MCF 10A (cell line): ENCODE measurements at regions of chr20 and their contacts with region 1.

Region 1: GRCh38 chr20:3716195-3716834 is 3.9 kb upstream of the SIGLEC1 start:
- DNase-seq: peak; percentile 59
- H3K4me3 Mint-ChIP-seq: no peak overlapping the region
- H3K27ac Mint-ChIP-seq: no peak overlapping the region
- H3K4me1 Mint-ChIP-seq: no peaks in the 10 kb centered on the region
- H3K27me3 Mint-ChIP-seq: peaks cover 18% of the 10 kb centered on the region
- CTCF ChIP-seq: peak; percentile 67

Region 2: GRCh38 chr20:2919518-2920245 is 796.6 kb before region 1 on chr20:
- CTCF ChIA-PET with region 1: no interaction called
- POLR2A ChIA-PET with region 1: no interaction called
- intact Hi-C with region 1: no loop called
- DNase-seq: no peak
- H3K4me3 Mint-ChIP-seq: no peak overlapping the region
- H3K27ac Mint-ChIP-seq: no peak overlapping the region
- H3K4me1 Mint-ChIP-seq: peaks cover 10% of the 10 kb centered on the region
- H3K27me3 Mint-ChIP-seq: no peaks in the 10 kb centered on the region
- CTCF ChIP-seq: no peak

Region 3: GRCh38 chr20:3358676-3359340 is 357.5 kb before region 1 on chr20:
- CTCF ChIA-PET with region 1: no interaction called
- POLR2A ChIA-PET with region 1: no interaction called
- intact Hi-C with region 1: no loop called
- DNase-seq: no peak
- H3K4me3 Mint-ChIP-seq: no peak overlapping the region
- H3K27ac Mint-ChIP-seq: no peak overlapping the region
- H3K4me1 Mint-ChIP-seq: peaks cover 5% of the 10 kb centered on the region
- H3K27me3 Mint-ChIP-seq: no peaks in the 10 kb centered on the region
- CTCF ChIP-seq: no peak

Region 4: GRCh38 chr20:3483784-3484183 is 232.5 kb before region 1 on chr20:
- CTCF ChIA-PET with region 1: no interaction called
- POLR2A ChIA-PET with region 1: no interaction called
- intact Hi-C with region 1: no loop called
- DNase-seq: peak; percentile 27
- H3K4me3 Mint-ChIP-seq: no peak overlapping the region
- H3K27ac Mint-ChIP-seq: peak overlapping the region; percentile 40
- H3K4me1 Mint-ChIP-seq: peaks cover 6% of the 10 kb centered on the region
- H3K27me3 Mint-ChIP-seq: no peaks in the 10 kb centered on the region
- CTCF ChIP-seq: no peak

Region 5: DNA sequence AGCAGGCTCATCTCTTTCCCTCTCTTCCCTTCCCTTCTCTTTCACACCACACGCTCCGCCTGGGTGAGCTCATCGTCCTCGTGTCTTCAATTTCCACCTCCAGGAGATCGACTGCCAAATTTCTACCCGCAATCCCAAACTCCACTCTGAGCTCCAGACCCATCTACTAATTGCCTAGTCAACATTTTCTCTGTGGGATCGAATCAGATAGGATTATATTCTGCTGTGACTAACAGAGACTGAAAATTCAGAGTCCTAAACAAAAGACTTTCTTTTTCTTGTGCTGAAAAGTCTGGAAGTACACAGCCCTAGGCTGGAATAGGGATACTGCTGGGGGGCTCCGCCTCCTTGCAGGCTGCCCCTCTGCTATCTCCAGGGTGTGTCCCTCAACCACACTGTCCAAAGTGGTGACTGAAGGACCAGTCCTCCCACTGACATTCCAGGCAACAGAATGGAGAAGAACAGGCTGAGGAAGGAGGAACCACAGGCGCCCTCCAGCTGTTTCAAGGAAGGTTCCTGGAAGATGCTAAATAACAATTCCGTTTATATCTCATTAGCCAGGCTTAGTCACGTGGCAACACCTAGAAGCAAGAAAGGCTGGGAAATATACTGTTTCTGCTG is 11.2 kb after region 1 on chr20:
- CTCF ChIA-PET with region 1: interaction called, 20 read pairs
- POLR2A ChIA-PET with region 1: no interaction called
- intact Hi-C with region 1: no loop called
- DNase-seq: peak; percentile 26
- H3K4me3 Mint-ChIP-seq: peak overlapping the region; percentile 42
- H3K27ac Mint-ChIP-seq: no peak overlapping the region
- H3K4me1 Mint-ChIP-seq: peaks cover 13% of the 10 kb centered on the region
- H3K27me3 Mint-ChIP-seq: peaks cover 36% of the 10 kb centered on the region
- CTCF ChIP-seq: no peak

Region 6: DNA sequence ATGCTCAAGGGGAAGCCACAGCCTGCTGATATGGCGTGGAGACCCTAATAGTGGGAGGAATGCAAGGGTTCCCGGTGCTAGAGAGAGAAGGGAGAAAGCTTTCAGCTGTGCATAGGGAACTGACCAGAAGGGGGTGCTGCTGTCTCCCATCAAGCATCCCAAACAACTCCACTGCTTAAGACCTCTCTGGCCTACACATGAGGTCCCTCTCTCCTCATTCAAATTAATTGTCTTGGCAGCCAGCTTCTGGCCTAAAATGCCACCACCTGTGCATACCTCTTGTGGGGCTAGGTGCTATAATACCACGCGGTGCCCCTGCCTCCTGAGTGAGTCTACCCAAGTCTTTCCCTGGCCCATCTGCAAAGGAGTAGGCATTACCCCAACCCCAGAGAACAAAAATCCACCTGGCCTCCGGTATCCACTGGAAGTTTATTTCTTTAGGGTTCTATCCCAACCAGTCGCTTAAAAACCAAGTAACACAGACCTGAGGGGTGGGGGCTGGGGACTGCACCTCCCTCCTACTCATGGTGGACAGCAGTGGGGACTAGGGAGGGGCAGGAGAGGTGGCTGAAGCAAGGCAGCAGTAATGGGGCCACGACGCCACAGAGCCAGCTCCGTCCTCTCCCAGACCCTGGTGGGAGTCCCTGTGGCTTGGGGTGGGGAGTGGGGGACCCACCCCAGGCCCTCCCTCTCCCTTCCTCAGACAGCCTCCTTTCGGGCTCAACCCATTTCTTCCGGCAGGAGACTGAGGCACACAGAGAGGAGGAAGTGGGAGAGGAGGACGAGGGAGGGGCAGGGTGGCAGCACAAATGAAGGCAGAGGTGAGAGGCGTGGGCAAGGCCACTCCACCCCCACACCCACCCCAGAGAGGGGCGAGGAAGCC is 37.0 kb after region 1 on chr20:
- CTCF ChIA-PET with region 1: interaction called, 8 read pairs
- POLR2A ChIA-PET with region 1: interaction called, 6 read pairs
- intact Hi-C with region 1: loop called (anchors 2 kb)
- DNase-seq: peak; percentile 72
- H3K4me3 Mint-ChIP-seq: no peak overlapping the region
- H3K27ac Mint-ChIP-seq: no peak overlapping the region
- H3K4me1 Mint-ChIP-seq: no peaks in the 10 kb centered on the region
- H3K27me3 Mint-ChIP-seq: no peaks in the 10 kb centered on the region
- CTCF ChIP-seq: peak; percentile 78

Region 7: DNA sequence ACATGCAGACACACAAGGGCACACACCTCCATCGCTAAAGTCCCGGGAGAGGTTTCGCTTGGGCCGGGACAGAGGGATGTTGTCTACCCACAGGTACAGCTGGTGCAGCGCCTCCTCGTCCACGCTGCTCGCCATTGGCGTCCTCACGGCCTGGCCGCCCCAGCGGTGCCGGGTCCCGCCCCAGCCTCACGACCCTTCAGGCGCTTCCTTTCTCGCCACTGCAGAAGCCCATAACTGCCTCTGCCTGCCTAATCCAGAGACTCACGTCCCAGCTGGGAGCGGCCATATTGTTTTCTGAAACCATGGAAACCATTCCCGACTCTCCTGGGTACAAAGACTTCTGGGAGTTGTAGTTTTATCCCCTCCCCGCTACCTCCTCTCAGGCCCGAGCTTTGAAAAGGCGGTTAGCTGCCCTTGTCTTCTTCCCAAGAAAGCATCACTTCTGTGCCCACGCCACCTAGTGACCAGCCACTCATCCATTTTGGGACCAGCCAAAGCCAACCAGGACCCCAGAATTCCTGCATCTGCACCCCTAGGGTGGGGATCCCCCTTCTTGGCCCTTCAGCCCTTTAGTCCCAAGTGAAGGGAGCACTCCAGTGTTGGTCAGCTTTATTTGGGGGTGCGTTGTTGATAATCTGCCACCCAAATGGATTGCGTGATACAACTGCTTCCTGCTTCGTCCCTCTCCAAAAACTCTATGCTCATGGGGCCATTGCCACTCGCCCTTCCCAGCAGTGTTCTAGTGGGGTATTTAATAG is 65.0 kb after region 1 on chr20 and contains the start of gene SPEF1:
- CTCF ChIA-PET with region 1: interaction called, 7 read pairs
- POLR2A ChIA-PET with region 1: interaction called, 3 read pairs
- intact Hi-C with region 1: loop called (anchors 1 kb)
- DNase-seq: peak; percentile 95
- H3K4me3 Mint-ChIP-seq: peak within 1 kb of the TSS; percentile 73
- H3K27ac Mint-ChIP-seq: peak within 1 kb of the TSS; percentile 87
- H3K4me1 Mint-ChIP-seq: peaks cover 34% of the 10 kb centered on the region
- H3K27me3 Mint-ChIP-seq: no peaks in the 10 kb centered on the region
- CTCF ChIP-seq: peak; percentile 26
- total RNA-seq, gene SPEF1: 0.32 TPM in 1 of 2 replicates, not detected in the other

Region 8: GRCh38 chr20:4006640-4007039 is 290.3 kb after region 1 on chr20:
- CTCF ChIA-PET with region 1: no interaction called
- POLR2A ChIA-PET with region 1: no interaction called
- intact Hi-C with region 1: no loop called
- DNase-seq: no peak
- H3K4me3 Mint-ChIP-seq: no peak overlapping the region
- H3K27ac Mint-ChIP-seq: peak overlapping the region; percentile 46
- H3K4me1 Mint-ChIP-seq: peaks cover 18% of the 10 kb centered on the region
- H3K27me3 Mint-ChIP-seq: no peaks in the 10 kb centered on the region
- CTCF ChIP-seq: no peak